Activated B cell treated with CpG ODN at 0.5 μM for 24 hours (primary cell): ENCODE measurements at regions of chr1 and their contacts with region 1.

Region 1: GRCh38 chr1:153277817-153278216 is 18.3 kb downstream of the LORICRIN start:
- DNase-seq: peak; percentile 40
- ATAC-seq: peak; percentile 84
- H3K4me3 Mint-ChIP-seq: no peak overlapping the region
- H3K27ac Mint-ChIP-seq: no peak overlapping the region
- H3K4me1 Mint-ChIP-seq: no peaks in the 10 kb centered on the region
- H3K27me3 Mint-ChIP-seq: peaks cover 28% of the 10 kb centered on the region
- CTCF ChIP-seq: peak; percentile 27

Region 2: GRCh38 chr1:152654110-152654509 is 623.7 kb before region 1 on chr1:
- CTCF ChIA-PET with region 1: no interaction called
- POLR2A ChIA-PET with region 1: no interaction called
- intact Hi-C with region 1: loop called (anchors 5 kb)
- DNase-seq: no peak
- ATAC-seq: no peak
- H3K4me3 Mint-ChIP-seq: no peak overlapping the region
- H3K27ac Mint-ChIP-seq: no peak overlapping the region
- H3K4me1 Mint-ChIP-seq: no peaks in the 10 kb centered on the region
- H3K27me3 Mint-ChIP-seq: peaks cover 13% of the 10 kb centered on the region
- CTCF ChIP-seq: no peak

Region 3: DNA sequence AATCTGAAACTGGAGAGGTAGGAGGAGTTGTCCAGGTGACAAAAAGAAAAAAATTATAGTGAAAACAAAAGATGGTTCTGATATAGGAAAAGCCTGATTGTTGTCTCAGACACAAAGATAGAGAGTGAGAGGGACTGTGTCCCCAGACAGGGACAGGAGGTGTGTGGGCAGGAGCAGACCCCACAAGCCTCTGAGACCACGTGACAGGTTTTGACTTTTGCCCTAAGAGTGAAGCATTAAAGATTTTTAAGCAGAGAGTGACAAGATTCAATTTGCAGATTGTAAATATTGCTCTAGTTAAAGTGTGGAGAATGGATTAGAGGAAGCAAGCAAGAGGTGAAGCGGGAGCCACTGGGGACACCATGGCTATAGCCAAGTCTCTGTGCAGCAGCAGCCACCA is 50.0 kb before region 1 on chr1:
- CTCF ChIA-PET with region 1: interaction called, 5 read pairs
- POLR2A ChIA-PET with region 1: no interaction called
- intact Hi-C with region 1: loop called (anchors 1 kb)
- DNase-seq: no peak
- ATAC-seq: no peak
- H3K4me3 Mint-ChIP-seq: no peak overlapping the region
- H3K27ac Mint-ChIP-seq: no peak overlapping the region
- H3K4me1 Mint-ChIP-seq: no peaks in the 10 kb centered on the region
- H3K27me3 Mint-ChIP-seq: peaks cover 15% of the 10 kb centered on the region
- CTCF ChIP-seq: no peak

Region 4: DNA sequence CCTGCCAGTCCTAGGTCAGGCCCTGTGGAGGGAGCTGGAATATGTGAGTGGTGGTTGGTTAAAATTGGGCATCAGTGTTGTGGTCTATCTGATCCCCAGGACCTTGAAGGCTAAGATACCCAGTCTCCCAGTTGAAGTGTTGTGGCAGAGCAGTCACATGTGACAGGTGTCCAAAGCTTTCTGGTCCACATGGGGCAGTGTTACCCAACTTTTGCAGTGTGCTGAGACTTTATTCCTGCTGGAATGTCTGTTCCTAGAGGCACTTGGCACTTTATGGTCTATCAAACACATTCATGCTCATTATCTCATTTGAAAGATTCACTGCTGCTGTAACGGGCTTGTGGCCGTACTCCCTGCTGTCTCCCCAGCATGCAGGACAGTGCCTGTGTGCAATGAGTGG is 39.3 kb before region 1 on chr1:
- CTCF ChIA-PET with region 1: interaction called, 5 read pairs
- POLR2A ChIA-PET with region 1: no interaction called
- intact Hi-C with region 1: loop called (anchors 2 kb)
- DNase-seq: no peak
- ATAC-seq: no peak
- H3K4me3 Mint-ChIP-seq: no peak overlapping the region
- H3K27ac Mint-ChIP-seq: no peak overlapping the region
- H3K4me1 Mint-ChIP-seq: no peaks in the 10 kb centered on the region
- H3K27me3 Mint-ChIP-seq: peaks cover 27% of the 10 kb centered on the region
- CTCF ChIP-seq: no peak

Region 5: GRCh38 chr1:153261281-153262069 is 16.3 kb before region 1 on chr1:
- CTCF ChIA-PET with region 1: interaction called, 5 read pairs
- POLR2A ChIA-PET with region 1: interaction called, 3 read pairs
- intact Hi-C with region 1: loop called (anchors 2 kb)
- DNase-seq: peak; percentile 31
- ATAC-seq: peak; percentile 29
- H3K4me3 Mint-ChIP-seq: peak overlapping the region; percentile 82
- H3K27ac Mint-ChIP-seq: peak overlapping the region; percentile 91
- H3K4me1 Mint-ChIP-seq: peaks cover 32% of the 10 kb centered on the region
- H3K27me3 Mint-ChIP-seq: peaks cover 19% of the 10 kb centered on the region
- CTCF ChIP-seq: no peak